ENCODE measurements at regions of chr7 and their contacts with region 1.

Region 1: DNA sequence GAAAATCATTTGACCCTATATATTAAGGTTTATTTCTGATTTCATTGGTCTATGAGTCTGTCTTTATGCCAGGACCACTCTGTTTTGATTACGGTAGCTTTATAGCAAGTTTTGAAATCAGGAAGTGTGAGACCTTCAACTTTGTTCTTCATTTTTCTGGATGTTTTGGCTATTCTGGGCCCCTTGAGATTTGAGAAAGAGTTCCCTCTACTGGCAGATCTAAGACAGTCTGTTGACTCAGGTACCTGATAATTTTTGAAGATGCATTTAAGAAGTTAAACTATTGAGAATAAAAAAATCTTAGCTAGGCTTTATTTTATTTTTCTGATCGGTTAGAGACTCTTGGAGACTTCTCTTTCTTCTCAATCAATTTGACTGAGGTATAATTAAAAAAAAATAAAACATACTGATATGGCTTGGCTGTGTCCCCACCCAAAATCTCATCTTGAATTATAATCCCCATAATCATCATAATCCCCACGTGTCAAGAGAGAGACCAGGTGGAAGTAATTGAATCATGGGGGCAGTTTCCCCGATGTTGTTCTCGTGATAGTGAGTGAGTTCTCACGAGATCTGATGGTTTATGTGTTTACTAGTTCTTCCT is 209.2 kb downstream of the SNX10 start:
- DNase-seq: no peak
- H3K4me3 Mint-ChIP-seq: no peak overlapping the region
- H3K27ac Mint-ChIP-seq: no peak overlapping the region
- H3K4me1 Mint-ChIP-seq: peaks cover 24% of the 10 kb centered on the region
- H3K27me3 Mint-ChIP-seq: no peaks in the 10 kb centered on the region
- CTCF ChIP-seq: peak; percentile 48

Region 2: DNA sequence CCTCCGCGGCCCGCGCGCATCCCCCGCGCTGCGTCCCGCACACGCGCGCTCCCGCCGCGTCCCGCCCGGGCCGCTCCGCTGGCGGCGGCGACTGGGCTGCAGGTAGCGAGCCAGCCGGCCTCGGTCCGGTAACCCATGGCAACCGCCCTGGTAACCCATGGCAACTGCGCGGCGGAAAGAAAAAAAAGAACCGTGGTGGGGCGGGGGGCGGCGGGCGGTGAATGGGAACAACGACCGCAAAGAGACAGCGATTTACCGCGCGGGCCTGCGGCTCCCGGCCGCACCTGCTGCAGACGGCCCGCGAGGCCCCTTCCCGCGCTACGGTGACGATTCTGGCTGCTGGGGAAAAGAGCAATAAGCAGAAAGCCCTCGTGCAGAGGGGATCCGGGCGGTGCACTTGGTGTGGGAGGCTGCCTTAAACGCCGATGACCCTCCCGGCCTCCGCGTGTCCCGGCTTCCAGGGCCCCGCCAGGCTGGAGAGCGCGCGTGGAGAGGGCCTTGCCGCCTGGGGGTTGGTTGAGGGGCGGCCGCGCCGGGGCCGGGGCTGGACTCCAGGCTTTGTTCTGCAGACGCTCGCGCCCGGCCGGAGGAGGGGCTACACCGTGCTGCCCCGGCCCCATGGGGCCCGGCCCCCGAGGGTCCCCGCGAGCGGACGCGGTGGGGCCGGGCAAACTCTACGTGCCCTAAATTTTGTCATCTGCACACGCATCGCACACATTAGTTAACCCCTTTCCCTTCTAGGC is 124.5 kb before region 1 on chr7:
- CTCF ChIA-PET with region 1: interaction called, 3 read pairs
- intact Hi-C with region 1: loop called (anchors 2 kb)
- DNase-seq: peak; percentile 84
- H3K4me3 Mint-ChIP-seq: peak overlapping the region; percentile 90
- H3K27ac Mint-ChIP-seq: peak overlapping the region; percentile 64
- H3K4me1 Mint-ChIP-seq: peaks cover 6% of the 10 kb centered on the region
- H3K27me3 Mint-ChIP-seq: no peaks in the 10 kb centered on the region
- CTCF ChIP-seq: no peak

Region 3: GRCh38 chr7:26398756-26399501 is 101.9 kb before region 1 on chr7:
- CTCF ChIA-PET with region 1: interaction called, 3 read pairs
- intact Hi-C with region 1: loop called (anchors 5 kb)
- DNase-seq: peak; percentile 72
- H3K4me3 Mint-ChIP-seq: peak overlapping the region; percentile 92
- H3K27ac Mint-ChIP-seq: peak overlapping the region; percentile 72
- H3K4me1 Mint-ChIP-seq: peaks cover 38% of the 10 kb centered on the region
- H3K27me3 Mint-ChIP-seq: no peaks in the 10 kb centered on the region
- CTCF ChIP-seq: no peak

Region 4: GRCh38 chr7:26777385-26777784 is 276.5 kb after region 1 on chr7:
- CTCF ChIA-PET with region 1: no interaction called
- intact Hi-C with region 1: no loop called
- DNase-seq: no peak
- H3K4me3 Mint-ChIP-seq: no peak overlapping the region
- H3K27ac Mint-ChIP-seq: no peak overlapping the region
- H3K4me1 Mint-ChIP-seq: no peaks in the 10 kb centered on the region
- H3K27me3 Mint-ChIP-seq: no peaks in the 10 kb centered on the region
- CTCF ChIP-seq: no peak

Measured in Calu3 (cell line).